ENCODE measurements at regions of chrX and their contacts with region 1.

Region 1: GRCh38 chrX:15854712-15855567 is at the start of gene AP1S2:
- DNase-seq: peak; percentile 89
- H3K4me3 Mint-ChIP-seq: peak within 1 kb of the TSS; percentile 88
- H3K27ac Mint-ChIP-seq: peak within 1 kb of the TSS; percentile 90
- H3K4me1 Mint-ChIP-seq: peaks cover 10% of the 10 kb centered on the region
- H3K27me3 Mint-ChIP-seq: no peaks in the 10 kb centered on the region
- total RNA-seq, gene AP1S2: 20.7 and 35.3 TPM in 2 replicates

Region 2: DNA sequence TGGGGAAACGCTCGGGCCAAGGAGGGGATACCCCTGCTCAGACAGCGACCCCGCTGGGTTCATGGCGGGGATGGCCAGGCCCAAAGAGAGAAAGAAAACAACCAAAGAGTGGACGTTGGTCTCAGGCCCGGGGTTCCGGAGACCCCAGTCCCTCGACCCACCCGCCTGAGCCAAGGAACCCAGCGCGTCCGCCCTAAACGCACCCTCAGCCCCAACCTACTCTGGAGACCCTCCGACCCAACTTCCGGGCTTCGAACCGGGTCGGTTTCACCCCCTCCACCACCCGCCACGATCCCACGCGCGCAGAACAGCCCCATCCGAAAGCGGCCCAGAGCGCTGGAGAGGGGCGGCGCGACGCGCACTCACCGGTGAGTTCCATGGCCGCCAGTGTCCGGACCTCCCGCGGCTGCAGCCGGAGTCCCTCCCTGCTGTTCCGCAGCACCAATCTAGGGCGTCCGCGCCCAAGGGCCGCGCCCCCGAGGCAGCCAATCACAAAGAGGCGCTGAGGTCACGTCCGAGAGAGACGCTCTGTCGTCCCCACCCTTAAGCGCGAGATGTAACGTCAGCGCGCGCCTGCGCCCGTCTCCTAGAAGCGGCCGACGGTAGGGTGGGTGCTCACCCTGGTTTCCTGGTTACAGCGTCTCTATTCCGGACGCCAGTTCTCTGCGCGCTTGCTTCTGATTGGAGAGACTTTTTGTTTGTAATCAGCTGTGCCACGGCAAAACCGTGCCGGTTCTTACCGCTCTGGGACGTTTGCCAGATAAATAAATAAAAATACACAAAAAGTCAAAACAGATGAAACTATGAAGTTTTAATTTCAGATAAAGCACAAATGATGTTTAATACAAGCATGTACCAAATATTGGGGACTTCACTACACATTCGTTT is 519.6 kb before region 1 on chrX and contains the start of gene PIGA:
- intact Hi-C with region 1: loop called (anchors 2 kb)
- DNase-seq: peak; percentile 89
- H3K4me3 Mint-ChIP-seq: peak within 1 kb of the TSS; percentile 91
- H3K27ac Mint-ChIP-seq: peak within 1 kb of the TSS; percentile 88
- H3K4me1 Mint-ChIP-seq: peaks cover 14% of the 10 kb centered on the region
- H3K27me3 Mint-ChIP-seq: no peaks in the 10 kb centered on the region
- total RNA-seq, gene PIGA: 23.9 and 25.4 TPM in 2 replicates

Region 3: DNA sequence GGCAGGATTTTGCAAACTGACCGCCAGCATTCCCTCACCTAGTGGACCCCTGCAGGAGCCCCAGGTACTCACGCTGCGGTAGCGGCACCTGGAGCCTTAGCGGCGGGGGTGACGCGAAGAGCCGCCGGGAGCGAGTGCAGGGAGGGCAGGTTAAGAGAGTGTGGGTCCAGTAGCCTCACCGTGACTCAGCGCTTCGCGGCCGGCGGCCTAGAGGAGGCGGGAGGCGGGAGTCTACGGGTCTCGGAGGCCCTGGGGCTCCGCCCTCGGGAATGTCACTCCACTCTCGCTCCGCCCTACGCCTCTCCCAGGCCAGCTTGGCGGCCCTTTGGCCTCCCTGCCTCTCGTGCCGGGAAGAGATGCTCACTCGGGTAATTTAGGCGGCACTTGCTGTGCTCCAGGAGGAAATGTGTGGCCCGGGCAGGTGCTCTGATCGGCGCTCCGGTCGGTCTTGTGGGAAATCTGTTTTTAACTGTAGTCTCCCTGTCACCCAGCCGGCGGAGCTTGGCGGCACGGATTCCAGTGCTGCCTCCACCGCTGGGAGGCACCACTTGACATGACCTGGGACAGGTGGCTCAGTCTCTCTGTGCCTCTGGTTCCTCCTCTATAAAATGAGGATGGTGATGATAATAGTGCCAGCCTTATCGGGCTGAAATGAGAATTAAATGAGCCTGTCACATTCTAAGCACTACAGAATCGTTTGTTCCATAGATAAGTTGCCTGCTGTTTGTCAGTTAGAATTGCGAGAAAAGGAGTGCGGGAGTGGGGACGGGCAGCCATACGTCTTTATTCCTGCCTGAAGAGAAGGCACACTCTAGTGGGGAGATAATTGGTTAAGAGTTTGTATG is 361.6 kb before region 1 on chrX and contains the start of gene PIR:
- intact Hi-C with region 1: no loop called
- DNase-seq: peak; percentile 54
- H3K4me3 Mint-ChIP-seq: peak within 1 kb of the TSS; percentile 86
- H3K27ac Mint-ChIP-seq: peak within 1 kb of the TSS; percentile 65
- H3K4me1 Mint-ChIP-seq: peaks cover 21% of the 10 kb centered on the region
- H3K27me3 Mint-ChIP-seq: peaks cover 6% of the 10 kb centered on the region
- total RNA-seq, gene PIR: 4.3 and 4.9 TPM in 2 replicates

Region 4: GRCh38 chrX:15749642-15750610 is 105.0 kb before region 1 on chrX:
- intact Hi-C with region 1: loop called (anchors 5 kb)
- DNase-seq: no peak
- H3K4me3 Mint-ChIP-seq: peak overlapping the region; percentile 45
- H3K27ac Mint-ChIP-seq: peak overlapping the region; percentile 97
- H3K4me1 Mint-ChIP-seq: peaks cover 39% of the 10 kb centered on the region
- H3K27me3 Mint-ChIP-seq: no peaks in the 10 kb centered on the region

Region 5: DNA sequence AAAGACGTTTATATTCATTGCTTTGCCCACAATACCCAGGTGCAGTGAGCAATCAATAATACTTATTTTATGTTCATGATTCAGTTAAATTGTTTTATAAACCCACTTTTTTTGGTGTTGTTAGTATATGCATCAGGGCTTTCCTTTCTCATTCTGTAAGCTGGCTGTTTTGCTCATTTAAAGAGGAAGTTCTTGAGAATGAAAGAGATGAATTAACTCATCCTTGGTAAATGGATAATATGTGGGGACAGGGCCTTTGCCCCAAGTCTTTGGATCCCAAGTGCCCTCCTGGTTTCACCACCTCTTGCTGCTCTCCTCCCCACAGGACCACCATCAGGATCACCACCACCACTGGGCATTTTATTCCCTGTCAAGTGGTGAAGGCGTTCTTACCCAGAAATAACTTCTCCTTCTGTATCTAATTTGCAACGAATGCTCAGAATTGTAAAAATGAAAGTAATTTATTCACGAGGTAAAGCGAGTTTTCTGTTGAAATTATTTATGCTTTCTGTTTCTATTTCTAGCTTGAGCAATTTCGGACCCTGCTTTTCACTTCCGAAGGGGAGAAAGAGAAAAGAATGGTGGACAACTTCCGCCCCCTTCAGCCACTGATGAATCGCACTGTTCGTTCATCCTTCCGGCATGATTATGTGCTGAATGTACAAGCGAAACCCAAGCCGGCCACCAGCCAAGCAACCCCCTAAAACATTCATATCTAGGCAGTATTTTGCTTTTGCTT is 72.8 kb before region 1 on chrX:
- intact Hi-C with region 1: no loop called
- DNase-seq: no peak
- H3K4me3 Mint-ChIP-seq: peak overlapping the region; percentile 84
- H3K27ac Mint-ChIP-seq: peak overlapping the region; percentile 95
- H3K4me1 Mint-ChIP-seq: peaks cover 10% of the 10 kb centered on the region
- H3K27me3 Mint-ChIP-seq: no peaks in the 10 kb centered on the region

Region 6: GRCh38 chrX:15815779-15816437 is 39.0 kb before region 1 on chrX:
- intact Hi-C with region 1: loop called (anchors 1 kb)
- DNase-seq: peak; percentile 8
- H3K4me3 Mint-ChIP-seq: no peak overlapping the region
- H3K27ac Mint-ChIP-seq: peak overlapping the region; percentile 58
- H3K4me1 Mint-ChIP-seq: peaks cover 47% of the 10 kb centered on the region
- H3K27me3 Mint-ChIP-seq: no peaks in the 10 kb centered on the region

Region 7: DNA sequence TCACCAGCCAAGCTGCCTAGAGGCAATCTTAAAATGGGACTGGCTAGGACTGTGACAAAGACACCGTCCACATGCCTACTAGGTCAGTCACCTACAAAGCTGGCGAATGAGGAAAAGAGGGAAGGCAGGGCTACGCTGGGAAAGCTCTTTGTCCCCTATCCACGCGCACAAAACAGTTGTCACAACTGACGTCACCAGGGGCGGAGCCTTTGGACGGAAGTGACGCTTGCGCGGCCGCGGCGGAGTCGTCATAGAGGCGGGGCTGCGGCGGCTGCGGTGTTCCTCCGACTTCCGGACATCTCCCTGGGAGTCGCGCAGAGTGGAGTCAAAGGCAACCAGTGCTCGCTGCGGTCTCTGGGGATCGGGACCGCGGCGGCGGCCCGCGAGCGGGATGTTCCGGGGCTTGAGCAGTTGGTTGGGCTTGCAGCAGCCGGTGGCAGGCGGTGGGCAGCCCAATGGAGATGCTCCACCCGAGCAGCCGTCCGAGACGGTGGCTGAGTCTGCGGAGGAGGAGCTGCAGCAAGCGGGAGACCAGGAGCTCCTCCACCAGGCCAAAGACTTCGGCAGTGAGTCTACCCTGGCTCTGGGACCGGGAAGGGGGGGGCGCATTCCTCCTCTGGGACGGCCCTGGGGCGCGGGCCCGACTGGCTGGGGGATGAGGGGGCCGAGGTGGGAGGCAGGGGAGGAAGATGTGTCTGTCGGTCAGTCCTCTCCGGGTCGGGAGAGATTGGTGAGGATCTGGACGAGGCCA is 864.6 kb after region 1 on chrX and contains the start of gene SYAP1:
- intact Hi-C with region 1: loop called (anchors 1 kb)
- DNase-seq: peak; percentile 89
- H3K4me3 Mint-ChIP-seq: peak within 1 kb of the TSS; percentile 92
- H3K27ac Mint-ChIP-seq: peak within 1 kb of the TSS; percentile 94
- H3K4me1 Mint-ChIP-seq: peaks cover 16% of the 10 kb centered on the region
- H3K27me3 Mint-ChIP-seq: no peaks in the 10 kb centered on the region
- total RNA-seq, gene SYAP1: 19.5 and 19.7 TPM in 2 replicates

Measured in activated T-helper 1 cell treated with anti-CD3 and anti-CD28 coated beads, Interleukin-12 subunit alpha, Interleukin-12 subunit beta, Interleukin-2, Interleukin-4 antibody, amounts not matched to agents 30 ng/mL and 10 ng/mL and 1 ng/mL, durations not matched to agents 14 hours and 24 hours and 36 hours (primary cell).